ENCODE measurements at regions of chr3 and their contacts with region 1.

Region 1: DNA sequence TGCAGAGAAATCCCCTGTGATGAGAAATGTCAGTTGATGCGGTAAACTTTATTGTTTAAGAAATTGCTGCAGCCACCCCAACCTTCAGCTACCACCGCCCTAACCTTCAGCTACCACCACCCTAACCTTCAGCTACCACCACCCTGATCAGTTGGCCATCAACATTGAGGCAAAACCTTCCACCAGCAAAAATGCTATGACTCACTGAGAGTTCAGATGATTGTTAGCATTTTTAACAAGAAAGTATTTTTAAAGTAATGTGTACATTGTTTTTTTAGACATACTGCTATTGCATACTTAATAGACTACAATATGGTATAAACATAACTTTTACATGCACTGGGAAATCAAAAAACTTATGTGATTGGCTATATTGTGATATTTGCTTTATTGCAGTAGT is 30.0 kb downstream of the U2SURP start:
- H3K4me3 Mint-ChIP-seq: no peak overlapping the region
- H3K27ac Mint-ChIP-seq: no peak overlapping the region
- H3K4me1 Mint-ChIP-seq: peaks cover 11% of the 10 kb centered on the region
- H3K27me3 Mint-ChIP-seq: no peaks in the 10 kb centered on the region

Region 2: GRCh38 chr3:142418926-142419592 is 612.3 kb before region 1 on chr3:
- intact Hi-C with region 1: loop called (anchors 5 kb)
- H3K4me3 Mint-ChIP-seq: no peak overlapping the region
- H3K27ac Mint-ChIP-seq: no peak overlapping the region
- H3K4me1 Mint-ChIP-seq: no peaks in the 10 kb centered on the region
- H3K27me3 Mint-ChIP-seq: no peaks in the 10 kb centered on the region

Measured in dendritic cell treated with granulocyte-macrophage colony-stimulating factor and Interleukin-4, amounts not matched to agents 40 ng/mL and 50 ng/mL, for 4 days (primary cell).